T-cell (primary cell): ENCODE measurements at regions of chr20 and their contacts with region 1.

Region 1: DNA sequence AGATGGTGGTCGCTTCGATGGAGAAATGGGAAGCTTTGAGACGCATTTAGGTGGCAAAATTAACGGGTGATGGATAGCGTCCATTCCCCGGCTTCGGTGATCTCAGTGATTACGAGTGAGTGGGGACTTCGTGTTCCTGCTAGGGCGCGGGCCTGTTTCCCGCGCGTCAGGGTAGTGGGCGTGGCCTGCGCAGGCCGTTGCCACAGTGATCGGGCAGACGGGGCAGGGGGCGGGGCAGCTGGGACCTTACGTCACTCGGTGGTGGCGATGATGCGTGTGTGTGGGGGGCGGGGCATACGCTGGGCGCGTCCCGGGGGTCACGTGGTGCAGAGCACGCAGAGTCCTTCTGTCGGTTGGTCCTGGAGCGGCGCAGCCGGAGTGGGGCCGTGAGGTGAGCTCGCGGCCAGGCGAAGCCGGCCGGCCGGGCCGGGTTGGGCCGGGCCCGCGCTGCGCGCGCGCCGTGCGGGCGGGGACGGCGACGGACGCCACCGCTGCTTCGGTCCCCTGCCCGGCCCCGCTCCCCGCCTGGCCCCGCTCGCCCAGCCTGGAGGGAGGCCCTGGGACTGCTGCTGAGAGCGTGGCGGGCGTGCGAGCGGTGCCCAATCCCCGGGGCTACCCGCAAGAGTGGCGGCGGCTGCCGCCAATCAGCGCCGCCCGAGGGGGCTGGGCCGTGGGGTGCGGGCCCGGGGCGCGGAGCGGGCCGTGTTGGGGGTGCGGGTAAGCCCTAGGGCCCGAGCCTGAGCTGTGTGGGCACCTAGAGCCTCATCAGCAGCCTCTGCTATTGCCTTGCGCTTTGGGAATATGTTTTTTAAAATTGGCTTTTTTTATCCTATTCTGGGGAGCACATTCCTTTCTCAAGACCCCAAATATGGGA is at the start of gene PHF20:
- DNase-seq: peak; percentile 98 to 100 (median 100)
- ATAC-seq: peak; percentile 84 to 92 (median 90)
- H3K4me3 ChIP-seq: peak within 1 kb of the TSS; percentile 66 to 85
- H3K4me3 Mint-ChIP-seq: peak within 1 kb of the TSS; percentile 84 to 99 (median 85)
- H3K27ac ChIP-seq: peak within 1 kb of the TSS; percentile 98
- H3K27ac Mint-ChIP-seq: peak within 1 kb of the TSS; percentile 93 to 96
- H3K4me1 ChIP-seq: peaks cover 71 to 86% of the 10 kb centered on the region in 2 experiments
- H3K4me1 Mint-ChIP-seq: peaks cover 73 to 87% (median 82%) of the 10 kb centered on the region in 3 donors
- H3K27me3 ChIP-seq: no peaks in the 10 kb centered on the region
- H3K27me3 Mint-ChIP-seq: no peaks in the 10 kb centered on the region
- total RNA-seq, gene PHF20: 67.8 to 174 (median 68.9) TPM

Region 2: GRCh38 chr20:35699127-35699975 is 72.6 kb before region 1 on chr20 and contains the starts of genes NFS1 and ROMO1:
- CTCF ChIA-PET with region 1: no interaction called
- POLR2A ChIA-PET with region 1: interaction called in 1 of 2 experiments, 12 read pairs
- DNase-seq: peak; percentile 59 to 93 (median 85)
- ATAC-seq: peak; percentile 86 to 95 (median 92)
- H3K4me3 ChIP-seq: peak within 1 kb of the TSS; percentile 66 to 94
- H3K4me3 Mint-ChIP-seq: peak within 1 kb of the TSS; percentile 87 to 100 (median 89)
- H3K27ac ChIP-seq: peak within 1 kb of the TSS; percentile 87
- H3K27ac Mint-ChIP-seq: peak within 1 kb of the TSS; percentile 89 to 93
- H3K4me1 ChIP-seq: peaks cover 16 to 19% of the 10 kb centered on the region in 2 experiments
- H3K4me1 Mint-ChIP-seq: peaks cover 47 to 60% (median 57%) of the 10 kb centered on the region in 3 donors
- H3K27me3 ChIP-seq: no peaks in the 10 kb centered on the region
- H3K27me3 Mint-ChIP-seq: no peaks in the 10 kb centered on the region
- total RNA-seq, gene NFS1: 17.7 to 33.5 (median 31.2) TPM
- total RNA-seq, gene ROMO1: 38.4 to 79.7 (median 62.5) TPM

Region 3: DNA sequence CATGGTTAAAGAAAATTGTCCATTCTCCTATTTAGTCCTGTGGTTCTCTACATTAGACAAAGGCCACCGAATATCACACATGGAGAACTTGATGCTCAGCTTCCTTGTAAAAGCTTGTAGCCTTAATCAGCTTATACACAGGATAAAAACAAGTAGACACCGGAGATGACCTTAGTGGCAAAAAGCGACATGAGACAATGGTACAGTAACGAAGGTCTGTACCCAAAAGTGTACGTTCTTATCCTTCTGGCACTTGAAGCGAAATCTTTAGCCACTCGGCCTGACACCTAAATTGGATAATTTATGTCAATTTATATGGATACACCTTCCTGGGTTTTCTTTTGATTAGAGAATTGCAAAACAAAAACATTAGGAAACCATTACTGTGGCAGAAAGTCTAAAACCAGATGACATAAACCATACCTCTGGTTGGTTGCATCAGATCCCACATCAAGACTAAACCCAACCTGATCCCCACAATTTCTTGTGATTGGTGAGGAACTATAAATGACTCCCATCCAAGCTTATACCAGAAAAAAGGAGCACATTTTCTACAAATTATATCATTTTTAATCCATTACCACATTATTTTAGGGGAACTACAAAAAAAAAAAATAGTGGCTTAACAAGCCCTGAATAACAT is 36.0 kb before region 1 on chr20:
- CTCF ChIA-PET with region 1: interaction called in 1 of 2 experiments, 32 read pairs
- POLR2A ChIA-PET with region 1: interaction called, 7 to 246 read pairs
- DNase-seq: no peak
- ATAC-seq: no peak
- H3K4me3 ChIP-seq: no peak overlapping the region
- H3K4me3 Mint-ChIP-seq: peak overlapping the region; percentile 50 to 94 (median 54)
- H3K27ac ChIP-seq: peak overlapping the region; percentile 17
- H3K27ac Mint-ChIP-seq: peak overlapping the region in 1 of 2 donors; percentile 2
- H3K4me1 ChIP-seq: peaks cover 48 to 63% of the 10 kb centered on the region in 2 experiments
- H3K4me1 Mint-ChIP-seq: peaks cover 80 to 84% (median 82%) of the 10 kb centered on the region in 3 donors
- H3K27me3 ChIP-seq: no peaks in the 10 kb centered on the region
- H3K27me3 Mint-ChIP-seq: no peaks in the 10 kb centered on the region

Region 4: DNA sequence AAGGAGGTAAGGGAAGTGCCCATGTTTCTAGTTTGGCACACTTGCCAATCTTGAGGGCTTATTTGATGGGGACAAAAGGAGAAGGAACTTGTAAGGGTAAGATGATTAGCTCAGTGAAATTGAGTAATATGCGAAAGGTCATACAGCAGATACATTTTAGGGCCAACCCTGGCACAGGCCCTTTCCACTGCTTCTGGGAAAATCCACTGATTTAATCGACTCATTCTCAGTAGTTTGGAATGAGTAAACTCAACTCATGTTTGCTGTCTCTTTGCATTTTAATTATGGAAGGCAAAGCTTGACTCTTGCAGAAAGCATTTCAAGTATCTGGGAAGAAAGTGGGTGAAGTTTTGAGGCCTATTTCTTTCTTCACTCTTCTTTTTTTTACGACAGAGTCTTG is 19.9 kb after region 1 on chr20:
- CTCF ChIA-PET with region 1: interaction called in 1 of 2 experiments, 4 read pairs
- POLR2A ChIA-PET with region 1: interaction called in 1 of 2 experiments, 11 read pairs
- DNase-seq: no peak
- ATAC-seq: no peak
- H3K4me3 ChIP-seq: no peak overlapping the region
- H3K4me3 Mint-ChIP-seq: no peak overlapping the region
- H3K27ac ChIP-seq: no peak overlapping the region
- H3K27ac Mint-ChIP-seq: no peak overlapping the region
- H3K4me1 ChIP-seq: peaks cover 8 to 16% of the 10 kb centered on the region in 2 experiments
- H3K4me1 Mint-ChIP-seq: peaks cover 37 to 45% (median 40%) of the 10 kb centered on the region in 3 donors
- H3K27me3 ChIP-seq: no peaks in the 10 kb centered on the region
- H3K27me3 Mint-ChIP-seq: no peaks in the 10 kb centered on the region

Region 5: DNA sequence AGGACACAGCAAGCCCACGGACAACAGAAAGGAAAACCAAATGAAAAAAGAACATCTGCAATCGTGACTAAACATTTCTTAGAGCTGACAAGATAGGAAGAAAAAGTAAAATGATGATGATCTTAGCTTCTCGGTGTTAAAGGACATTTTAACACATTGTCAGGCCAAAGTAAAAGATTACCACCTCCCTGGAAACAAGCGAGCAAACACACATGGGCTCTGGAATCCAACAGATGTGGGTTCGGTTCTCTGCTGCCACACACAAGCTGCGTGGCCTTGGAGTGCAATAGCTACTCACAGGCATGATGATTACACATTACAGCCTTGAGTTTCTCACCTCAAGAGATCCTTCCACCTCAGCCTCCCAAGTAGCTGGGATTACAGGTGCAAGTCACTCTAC is 456.8 kb after region 1 on chr20:
- CTCF ChIA-PET with region 1: no interaction called
- POLR2A ChIA-PET with region 1: no interaction called
- DNase-seq: peak in 1 of 35 experiments; percentile 6
- ATAC-seq: peak in 2 of 4 experiments; percentile 19 to 53
- H3K4me3 ChIP-seq: no peak overlapping the region
- H3K4me3 Mint-ChIP-seq: peak overlapping the region in 1 of 3 donors; percentile 44
- H3K27ac ChIP-seq: no peak overlapping the region
- H3K27ac Mint-ChIP-seq: peak overlapping the region in 1 of 2 donors; percentile 13
- H3K4me1 ChIP-seq: peaks cover 4 to 10% of the 10 kb centered on the region in 2 experiments
- H3K4me1 Mint-ChIP-seq: peaks cover 7 to 30% (median 15%) of the 10 kb centered on the region in 3 donors
- H3K27me3 ChIP-seq: peaks cover 0 to 9% of the 10 kb centered on the region in 2 experiments
- H3K27me3 Mint-ChIP-seq: peaks cover 6 to 21% of the 10 kb centered on the region in 2 donors